ENCODE measurements at regions of chr7 and their contacts with region 1.

Region 1: DNA sequence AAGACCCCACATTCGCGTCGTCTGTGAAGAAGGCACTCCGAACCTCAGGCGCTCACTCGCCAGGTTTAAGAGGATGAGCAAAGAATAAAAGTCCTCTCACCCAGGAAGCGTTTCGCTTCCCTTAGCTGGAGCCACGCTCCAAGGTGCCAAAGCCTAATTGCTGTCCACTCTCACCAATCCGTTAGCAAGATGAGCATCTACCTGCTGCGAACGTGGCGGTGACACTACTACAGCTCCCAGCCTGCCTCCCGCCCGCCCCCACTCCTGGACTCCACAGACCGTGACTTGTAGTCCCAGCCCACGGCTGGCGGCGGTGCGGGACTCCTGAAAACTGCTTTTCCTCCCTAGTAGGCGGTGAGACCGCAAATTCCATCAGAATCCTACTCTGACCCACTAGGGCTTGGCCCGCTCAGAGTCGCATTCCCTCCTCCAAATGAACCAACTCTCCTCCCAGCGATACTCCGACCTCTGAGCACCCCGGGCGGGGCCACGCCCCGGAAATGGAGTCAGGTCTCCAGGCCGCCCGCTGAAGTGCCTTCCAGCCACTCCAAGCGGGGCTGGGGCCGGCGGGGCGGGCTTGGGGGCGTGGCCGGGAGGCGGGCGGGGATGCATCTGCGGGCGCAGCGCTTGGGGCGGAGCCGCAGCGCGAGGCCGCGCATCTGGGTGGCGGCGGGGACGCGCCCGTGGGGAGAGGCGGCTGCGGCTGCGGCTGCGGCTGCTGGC is 521 bp upstream of the PTPN12 start:
- DNase-seq: peak; percentile 98
- ATAC-seq: peak; percentile 94 to 95

Region 2: DNA sequence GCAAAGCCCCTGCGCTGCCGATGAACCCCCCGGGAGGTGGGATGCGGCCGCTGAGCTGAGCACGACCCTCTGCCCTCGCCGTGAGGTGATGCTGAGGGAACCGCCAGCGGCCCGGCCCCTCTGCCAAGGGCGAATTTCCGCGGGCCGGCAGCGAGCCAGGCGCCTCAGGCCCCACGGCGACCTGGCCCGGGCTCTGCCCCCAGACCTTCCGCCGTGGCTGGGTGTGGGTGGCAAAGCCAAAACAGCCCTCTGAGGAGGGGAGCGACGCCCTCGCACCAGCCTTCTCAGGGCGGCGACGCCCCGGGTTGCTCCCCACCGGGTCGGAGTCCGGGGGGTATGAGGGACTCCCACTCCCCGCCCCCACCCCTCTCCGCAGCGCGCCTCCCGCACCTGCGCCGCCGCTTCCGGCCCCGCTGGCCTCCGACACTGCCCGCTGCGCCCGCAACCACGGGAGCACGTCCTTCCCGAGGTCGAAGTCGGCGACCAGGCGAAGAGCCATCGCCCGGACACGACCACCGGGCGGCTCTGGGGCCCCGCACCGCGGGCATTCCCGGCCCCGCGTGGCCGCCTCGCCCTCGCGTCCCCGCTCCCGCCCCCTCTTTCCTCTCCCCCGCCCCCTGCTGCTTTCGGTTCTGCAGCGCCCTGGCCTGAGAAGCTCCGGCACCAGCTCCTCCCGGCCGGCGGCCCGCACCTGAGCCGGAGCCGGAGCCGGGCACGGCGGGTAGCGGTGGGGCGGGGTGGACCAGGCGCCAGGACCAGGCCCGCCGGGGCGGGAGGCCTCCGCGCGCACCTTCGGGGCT is 120.6 kb before region 1 on chr7 and contains the start of gene GSAP:
- intact Hi-C with region 1: loop called in 1 of 2 experiments (anchors 10 kb)
- DNase-seq: peak; percentile 58
- ATAC-seq: peak; percentile 88 to 94
- total RNA-seq, gene GSAP: 10.3 to 11.5 TPM

Region 3: DNA sequence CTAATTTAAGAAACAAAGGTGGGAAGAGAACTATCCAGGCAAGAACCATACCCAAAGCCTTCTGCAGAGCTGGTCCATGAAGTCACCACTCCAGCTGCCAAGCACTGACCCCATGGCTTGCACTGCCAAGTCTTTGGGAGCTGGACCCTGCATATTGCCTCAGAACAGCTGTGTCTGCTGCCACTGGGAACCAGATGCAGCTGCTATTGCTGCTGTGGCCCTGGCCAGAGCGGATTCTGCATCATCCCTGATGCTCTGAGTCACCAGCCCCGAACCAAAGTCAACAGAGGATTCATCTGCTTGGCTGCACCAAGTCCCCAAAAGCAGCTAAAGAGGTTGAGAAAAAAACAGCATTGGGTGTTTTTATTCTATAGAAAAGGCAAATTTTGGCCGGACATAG is 81.2 kb before region 1 on chr7:
- intact Hi-C with region 1: loop called in 1 of 2 experiments (anchors 10 kb)
- DNase-seq: peak; percentile 52
- ATAC-seq: peak in 1 of 2 donors; percentile 92

Measured in left cardiac atrium (tissue), 4 donors.